GM12878 (cell line): ENCODE measurements at regions of chr11 and their contacts with region 1.

Region 1: DNA sequence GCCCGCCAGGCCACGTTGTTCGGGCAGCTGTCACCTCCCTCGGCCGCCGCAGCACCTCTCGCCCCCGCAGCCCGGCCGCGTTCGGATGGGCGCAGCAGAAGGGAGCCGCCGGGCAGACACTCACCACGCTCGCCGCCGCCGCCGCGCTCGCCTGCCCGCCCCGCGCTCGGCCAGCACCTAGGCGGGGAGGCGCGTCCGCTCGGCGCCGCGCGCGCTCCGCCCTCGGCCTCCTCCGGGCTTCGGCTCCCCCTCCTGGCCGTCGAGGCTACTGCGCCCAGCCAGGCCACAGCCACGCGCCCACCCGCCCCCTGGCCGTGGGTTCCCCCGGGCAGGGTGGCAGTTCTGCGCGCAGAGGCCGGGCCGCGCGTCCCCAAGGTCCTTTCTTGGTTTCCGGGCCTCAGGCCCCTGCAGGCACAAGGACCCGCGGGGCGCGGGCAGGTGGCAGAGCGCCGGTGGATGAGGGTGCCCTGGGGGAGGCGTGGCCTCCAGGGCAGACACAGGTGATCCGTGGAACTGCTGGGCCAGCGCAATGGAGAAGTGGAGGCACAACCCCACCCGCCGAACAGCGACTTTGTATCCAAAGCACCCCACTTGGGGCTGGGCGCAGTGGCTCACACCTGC is at the start of gene SLC25A22:
- DNase-seq: no peak
- ATAC-seq: peak; percentile 70
- H3K4me3 ChIP-seq: peak within 1 kb of the TSS; percentile 97
- H3K27ac ChIP-seq: peak within 1 kb of the TSS; percentile 85
- H3K4me1 ChIP-seq: peaks cover 15% of the 10 kb centered on the region
- H3K27me3 ChIP-seq: no peaks in the 10 kb centered on the region
- CTCF ChIP-seq: peak; percentile 63 to 86 (median 67); a peak in 4 of 6 replicates
- EP300 ChIP-seq: no peak
- POLR2A ChIP-seq: peak; percentile 50; the same call in 1 of the 2 replicates
- RAD21 ChIP-seq: peak; percentile 50
- polyA plus RNA-seq, gene SLC25A22: 0.27 to 0.46 TPM

Region 2: GRCh38 chr11:747158-748006 is 50.8 kb before region 1 on chr11 and contains the start of gene TALDO1:
- CTCF ChIA-PET with region 1: interaction called, 4 read pairs
- POLR2A ChIA-PET with region 1: interaction called, 4 read pairs
- RAD21 ChIA-PET with region 1: interaction called, 9 read pairs
- SMC1A ChIA-PET with region 1: no interaction called
- in situ Hi-C with region 1: no loop called
- intact Hi-C with region 1: loop called (anchors 5 kb)
- DNase-seq: peak; percentile 42
- ATAC-seq: peak; percentile 97
- H3K4me3 ChIP-seq: peak within 1 kb of the TSS; percentile 90
- H3K27ac ChIP-seq: peak within 1 kb of the TSS; percentile 81
- H3K4me1 ChIP-seq: peaks cover 4% of the 10 kb centered on the region
- H3K27me3 ChIP-seq: no peaks in the 10 kb centered on the region
- CTCF ChIP-seq: peak in 2 of 3 experiments; percentile 21 to 35; a peak in 2 of 6 replicates
- EP300 ChIP-seq: no peak
- POLR2A ChIP-seq: peak; percentile 86
- RAD21 ChIP-seq: no peak
- polyA plus RNA-seq, gene TALDO1: 121 to 189 TPM

Region 3: GRCh38 chr11:809287-810039 is 11.3 kb after region 1 on chr11 and contains the start of gene RPLP2:
- CTCF ChIA-PET with region 1: interaction called, 5 read pairs
- POLR2A ChIA-PET with region 1: interaction called, 10 read pairs
- RAD21 ChIA-PET with region 1: interaction called, 3 read pairs
- SMC1A ChIA-PET with region 1: interaction called, 3 read pairs
- in situ Hi-C with region 1: no loop called
- intact Hi-C with region 1: loop called (anchors 1 kb)
- DNase-seq: peak; percentile 92
- ATAC-seq: peak; percentile 86
- H3K4me3 ChIP-seq: peak within 1 kb of the TSS; percentile 98
- H3K27ac ChIP-seq: peak within 1 kb of the TSS; percentile 99
- H3K4me1 ChIP-seq: peaks cover 8% of the 10 kb centered on the region
- H3K27me3 ChIP-seq: no peaks in the 10 kb centered on the region
- CTCF ChIP-seq: no peak
- EP300 ChIP-seq: peak; percentile 7 to 21; a peak in 2 of 4 replicates
- POLR2A ChIP-seq: peak; percentile 89
- RAD21 ChIP-seq: no peak
- polyA plus RNA-seq, gene RPLP2: 1,446 to 3,075 TPM